Naive thymus-derived CD4-positive, alpha-beta T cell (primary cell): ENCODE measurements at regions of chr19 and their contacts with region 1.

Region 1: GRCh38 chr19:18322759-18323460 is at the start of gene LSM4:
- DNase-seq: peak; percentile 95 to 100 (median 99)
- ATAC-seq: peak; percentile 98
- H3K4me3 ChIP-seq: peak within 1 kb of the TSS; percentile 86
- H3K4me3 Mint-ChIP-seq: peak within 1 kb of the TSS; percentile 80 to 88 (median 84)
- H3K27ac ChIP-seq: peak within 1 kb of the TSS; percentile 94
- H3K27ac Mint-ChIP-seq: peak within 1 kb of the TSS; percentile 89 to 99 (median 95)
- H3K4me1 ChIP-seq: peaks cover 47 to 55% of the 10 kb centered on the region in 2 donors
- H3K4me1 Mint-ChIP-seq: peaks cover 42 to 58% (median 51%) of the 10 kb centered on the region in 7 donors
- H3K27me3 ChIP-seq: no peaks in the 10 kb centered on the region
- H3K27me3 Mint-ChIP-seq: no peaks in the 10 kb centered on the region
- total RNA-seq, gene LSM4: 45.3 to 131 (median 56.2) TPM

Region 2: GRCh38 chr19:16608290-16608739 is 1714.6 kb before region 1 on chr19:
- CTCF ChIA-PET with region 1: no interaction called
- POLR2A ChIA-PET with region 1: no interaction called
- intact Hi-C with region 1: no loop called
- DNase-seq: no peak
- ATAC-seq: peak; percentile 85
- H3K4me3 ChIP-seq: no peak overlapping the region
- H3K4me3 Mint-ChIP-seq: no peak overlapping the region
- H3K27ac ChIP-seq: no peak overlapping the region
- H3K27ac Mint-ChIP-seq: peak overlapping the region in 6 of 9 donors; percentile 4 to 66 (median 15)
- H3K4me1 ChIP-seq: no peaks in the 10 kb centered on the region
- H3K4me1 Mint-ChIP-seq: peaks cover 31 to 69% (median 58%) of the 10 kb centered on the region in 7 donors
- H3K27me3 ChIP-seq: no peaks in the 10 kb centered on the region
- H3K27me3 Mint-ChIP-seq: no peaks in the 10 kb centered on the region

Region 3: GRCh38 chr19:17966550-17967256 is 356.2 kb before region 1 on chr19 and contains the start of gene KCNN1:
- CTCF ChIA-PET with region 1: no interaction called
- POLR2A ChIA-PET with region 1: no interaction called
- intact Hi-C with region 1: no loop called
- DNase-seq: no peak
- ATAC-seq: no peak
- H3K4me3 ChIP-seq: no peak within 1 kb of the TSS
- H3K4me3 Mint-ChIP-seq: peak within 1 kb of the TSS in 9 of 10 donors; percentile 34 to 81 (median 67)
- H3K27ac ChIP-seq: no peak within 1 kb of the TSS
- H3K27ac Mint-ChIP-seq: peak within 1 kb of the TSS in 1 of 9 donors; percentile 43
- H3K4me1 ChIP-seq: peaks cover 0 to 5% of the 10 kb centered on the region in 2 donors
- H3K4me1 Mint-ChIP-seq: peaks cover 0 to 11% (median 8%) of the 10 kb centered on the region in 7 donors
- H3K27me3 ChIP-seq: peaks cover 0 to 13% of the 10 kb centered on the region in 2 donors
- H3K27me3 Mint-ChIP-seq: peaks cover 32 to 48% (median 38%) of the 10 kb centered on the region in 5 donors
- total RNA-seq, gene KCNN1: 0.05 TPM in 1 of 5 experiments, not detected in the others

Region 4: DNA sequence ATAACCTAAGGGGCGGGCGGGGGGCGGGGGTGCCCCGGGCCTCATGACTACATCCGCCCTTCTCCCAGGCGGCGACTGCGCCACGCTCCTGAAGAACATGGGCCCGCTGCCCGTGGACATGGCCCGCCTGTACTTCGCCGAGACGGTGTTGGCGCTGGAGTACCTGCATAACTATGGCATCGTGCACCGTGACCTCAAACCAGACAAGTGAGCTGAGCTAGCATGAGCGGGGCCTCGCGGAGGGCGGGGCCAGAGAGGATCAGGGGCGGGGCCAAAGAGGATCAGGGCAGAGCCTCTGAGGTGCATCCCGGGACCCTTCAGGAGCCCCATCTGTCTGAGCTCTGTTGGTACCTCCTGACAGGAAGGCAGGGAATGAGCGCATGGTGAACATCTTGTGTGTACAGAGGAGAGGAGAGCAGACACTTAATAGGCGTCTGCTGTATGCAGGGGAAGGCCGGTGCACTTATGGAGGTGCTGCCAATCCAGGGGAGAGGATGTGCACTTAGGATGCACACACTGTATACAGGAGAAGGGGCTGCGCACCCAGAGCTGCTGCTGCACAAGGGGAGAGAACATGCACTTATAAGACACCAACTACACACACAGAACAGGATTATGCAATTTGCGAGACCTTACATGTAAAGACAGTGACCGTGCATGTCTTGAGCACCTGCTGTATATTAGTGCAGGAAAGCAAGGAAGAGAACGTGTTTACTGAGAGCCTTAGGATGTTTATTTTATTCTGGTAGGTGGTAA is 190.9 kb before region 1 on chr19:
- CTCF ChIA-PET with region 1: no interaction called
- POLR2A ChIA-PET with region 1: no interaction called
- intact Hi-C with region 1: no loop called
- DNase-seq: no peak
- ATAC-seq: no peak
- H3K4me3 ChIP-seq: no peak overlapping the region
- H3K4me3 Mint-ChIP-seq: no peak overlapping the region
- H3K27ac ChIP-seq: no peak overlapping the region
- H3K27ac Mint-ChIP-seq: peak overlapping the region in 1 of 9 donors; percentile 33
- H3K4me1 ChIP-seq: peaks cover 0 to 7% of the 10 kb centered on the region in 2 donors
- H3K4me1 Mint-ChIP-seq: peaks cover 0 to 10% (median 0%) of the 10 kb centered on the region in 7 donors
- H3K27me3 ChIP-seq: no peaks in the 10 kb centered on the region
- H3K27me3 Mint-ChIP-seq: no peaks in the 10 kb centered on the region

Region 5: GRCh38 chr19:18291590-18292461 is 31.1 kb before region 1 on chr19:
- CTCF ChIA-PET with region 1: interaction called, 4 read pairs
- POLR2A ChIA-PET with region 1: interaction called, 49 read pairs
- intact Hi-C with region 1: loop called (anchors 1 kb)
- DNase-seq: peak in 8 of 9 donors; percentile 67 to 93 (median 70)
- ATAC-seq: peak; percentile 62
- H3K4me3 ChIP-seq: peak overlapping the region; percentile 84
- H3K4me3 Mint-ChIP-seq: peak overlapping the region; percentile 80 to 96 (median 92)
- H3K27ac ChIP-seq: peak overlapping the region; percentile 92
- H3K27ac Mint-ChIP-seq: peak overlapping the region; percentile 87 to 100 (median 97)
- H3K4me1 ChIP-seq: peaks cover 41 to 47% of the 10 kb centered on the region in 2 donors
- H3K4me1 Mint-ChIP-seq: peaks cover 38 to 73% (median 58%) of the 10 kb centered on the region in 7 donors
- H3K27me3 ChIP-seq: no peaks in the 10 kb centered on the region
- H3K27me3 Mint-ChIP-seq: no peaks in the 10 kb centered on the region

Region 6: DNA sequence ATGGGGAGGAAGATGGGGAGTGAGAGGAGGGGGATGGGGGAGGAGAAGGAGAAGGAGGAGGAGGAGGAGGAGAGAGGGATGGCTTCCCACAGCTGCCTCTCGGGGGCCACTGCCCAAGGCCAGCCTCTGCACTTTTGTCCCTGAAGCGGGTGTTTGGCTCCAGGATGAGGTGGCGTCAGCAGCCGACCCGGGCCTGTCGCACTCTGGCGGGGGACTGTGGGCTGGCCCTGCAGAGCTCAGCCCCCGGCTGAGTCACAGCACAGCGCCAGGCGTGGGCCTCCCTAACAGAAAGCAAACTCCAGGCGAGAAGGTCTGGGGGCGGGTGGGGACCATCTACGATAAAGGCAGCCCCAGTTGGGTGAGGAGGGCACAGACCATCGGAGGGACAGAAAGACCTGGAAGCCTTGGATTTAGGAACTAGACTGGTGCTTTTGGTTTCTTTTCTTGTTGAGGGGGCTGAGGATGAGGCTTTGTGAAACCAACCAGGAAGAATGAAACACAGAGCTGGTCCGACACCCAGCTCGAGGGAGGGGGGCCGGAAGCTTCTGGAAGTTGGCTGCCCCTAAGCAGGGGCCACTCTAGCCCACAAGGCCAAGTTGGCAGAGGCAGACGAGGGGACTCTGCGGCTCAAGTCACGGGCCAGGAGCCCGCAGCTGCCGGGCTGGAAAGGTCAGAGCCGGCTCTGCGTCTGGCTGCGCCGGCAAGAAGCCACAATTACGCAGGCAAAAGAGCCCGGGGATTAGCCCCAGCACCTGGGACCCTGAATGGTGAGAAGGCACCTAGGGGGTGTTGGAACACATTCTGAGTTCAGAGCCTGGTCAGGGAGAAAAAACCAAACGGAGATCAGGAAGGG is 18.2 kb before region 1 on chr19:
- CTCF ChIA-PET with region 1: interaction called, 6 read pairs
- POLR2A ChIA-PET with region 1: interaction called, 103 read pairs
- intact Hi-C with region 1: loop called (anchors 1 kb)
- DNase-seq: peak; percentile 47 to 85 (median 57)
- ATAC-seq: peak; percentile 84
- H3K4me3 ChIP-seq: peak overlapping the region; percentile 75
- H3K4me3 Mint-ChIP-seq: peak overlapping the region; percentile 90 to 98 (median 94)
- H3K27ac ChIP-seq: peak overlapping the region; percentile 97
- H3K27ac Mint-ChIP-seq: peak overlapping the region; percentile 95 to 100 (median 98)
- H3K4me1 ChIP-seq: peaks cover 31 to 37% of the 10 kb centered on the region in 2 donors
- H3K4me1 Mint-ChIP-seq: peaks cover 12 to 47% (median 43%) of the 10 kb centered on the region in 7 donors
- H3K27me3 ChIP-seq: no peaks in the 10 kb centered on the region
- H3K27me3 Mint-ChIP-seq: no peaks in the 10 kb centered on the region

Region 7: GRCh38 chr19:18310118-18310909 is 12.6 kb before region 1 on chr19:
- CTCF ChIA-PET with region 1: interaction called, 6 read pairs
- POLR2A ChIA-PET with region 1: interaction called, 103 read pairs
- intact Hi-C with region 1: no loop called
- DNase-seq: no peak
- ATAC-seq: no peak
- H3K4me3 ChIP-seq: no peak overlapping the region
- H3K4me3 Mint-ChIP-seq: no peak overlapping the region
- H3K27ac ChIP-seq: no peak overlapping the region
- H3K27ac Mint-ChIP-seq: peak overlapping the region in 3 of 9 donors; percentile 28 to 71 (median 46)
- H3K4me1 ChIP-seq: peaks cover 13 to 30% of the 10 kb centered on the region in 2 donors
- H3K4me1 Mint-ChIP-seq: peaks cover 12 to 42% (median 25%) of the 10 kb centered on the region in 7 donors
- H3K27me3 ChIP-seq: no peaks in the 10 kb centered on the region
- H3K27me3 Mint-ChIP-seq: no peaks in the 10 kb centered on the region